GM12878 (cell line): ENCODE measurements at regions of chr20 and their contacts with region 1.

Region 1: DNA sequence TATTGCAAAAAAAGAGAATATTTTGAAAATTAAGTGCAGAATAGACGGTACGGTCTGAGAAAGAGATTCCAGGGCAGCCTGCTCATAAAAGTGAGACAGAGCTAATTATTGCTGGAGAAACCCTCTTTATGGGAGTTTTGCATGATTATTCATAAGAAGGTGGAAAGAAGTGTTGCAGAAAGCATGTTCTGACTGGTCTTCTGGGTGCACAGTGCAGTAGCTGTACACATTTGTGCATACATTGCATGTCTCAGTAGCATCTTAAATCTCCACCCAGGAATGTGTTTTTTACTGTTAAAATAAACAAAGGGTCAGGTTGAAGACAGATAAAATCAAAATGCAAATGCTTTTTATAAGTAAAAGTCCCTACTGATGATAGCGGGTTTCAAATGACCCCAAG is 1813.6 kb upstream of the DEFB115 start:
- DNase-seq: peak; percentile 42
- ATAC-seq: peak; percentile 95
- H3K4me3 ChIP-seq: no peak overlapping the region
- H3K27ac ChIP-seq: no peak overlapping the region
- H3K4me1 ChIP-seq: no peaks in the 10 kb centered on the region
- H3K27me3 ChIP-seq: no peaks in the 10 kb centered on the region
- CTCF ChIP-seq: no peak
- EP300 ChIP-seq: no peak
- POLR2A ChIP-seq: no peak
- RAD21 ChIP-seq: no peak

Region 2: DNA sequence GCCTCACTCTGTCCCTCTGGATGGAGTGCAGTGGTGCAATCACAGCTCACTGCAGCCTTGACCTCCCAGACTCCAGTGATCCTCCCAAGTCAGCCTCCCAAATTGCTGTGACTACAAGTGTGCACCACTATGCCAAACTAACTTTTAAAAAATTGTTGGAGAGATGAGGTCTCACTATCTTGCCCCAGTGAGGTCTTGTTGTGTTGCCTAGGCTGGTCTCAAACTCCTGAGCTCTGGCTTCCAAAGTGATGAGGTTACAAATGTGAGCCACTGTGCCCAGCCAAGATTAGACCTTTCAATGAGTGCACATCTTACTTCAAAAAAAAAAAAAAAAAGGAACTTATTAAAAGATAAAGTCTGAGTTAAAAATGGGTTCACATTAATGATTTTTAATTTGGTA is 24.4 kb before region 1 on chr20:
- CTCF ChIA-PET with region 1: no interaction called
- POLR2A ChIA-PET with region 1: no interaction called
- RAD21 ChIA-PET with region 1: no interaction called
- SMC1A ChIA-PET with region 1: no interaction called
- in situ Hi-C with region 1: no loop called
- intact Hi-C with region 1: no loop called
- DNase-seq: no peak
- ATAC-seq: no peak
- H3K4me3 ChIP-seq: no peak overlapping the region
- H3K27ac ChIP-seq: no peak overlapping the region
- H3K4me1 ChIP-seq: no peaks in the 10 kb centered on the region
- H3K27me3 ChIP-seq: no peaks in the 10 kb centered on the region
- CTCF ChIP-seq: no peak
- EP300 ChIP-seq: no peak
- POLR2A ChIP-seq: no peak
- RAD21 ChIP-seq: no peak

Region 3: DNA sequence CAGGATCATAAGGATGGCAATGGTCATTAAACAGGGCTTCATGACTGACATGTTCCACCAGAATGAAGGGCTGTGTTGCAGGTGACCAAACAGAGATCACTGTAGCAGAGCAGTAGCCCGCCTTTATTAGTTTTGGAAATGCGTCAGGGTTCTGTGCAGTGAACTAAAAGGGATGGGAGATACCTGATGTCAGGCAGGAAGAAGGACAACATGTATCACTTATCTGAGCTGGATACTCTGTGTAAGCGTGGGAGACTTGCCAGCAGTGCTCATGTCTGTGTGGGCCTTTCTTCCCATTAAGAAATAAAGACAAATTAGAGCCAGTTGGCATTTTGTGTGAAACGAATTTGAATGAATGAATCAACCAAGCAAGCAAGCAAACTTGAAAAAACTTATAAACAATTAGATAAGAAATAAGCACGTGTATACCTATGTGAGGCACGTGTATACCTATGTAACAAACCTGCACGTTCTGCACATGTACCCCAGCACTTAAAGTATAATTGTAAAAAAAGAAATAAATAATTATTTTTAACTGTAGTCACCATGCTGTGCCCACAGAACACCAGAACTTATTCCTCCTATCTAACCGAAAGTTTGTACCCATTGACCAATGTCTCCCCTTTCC is 1864.8 kb after region 1 on chr20 and contains the start of gene DEFB116:
- CTCF ChIA-PET with region 1: no interaction called
- POLR2A ChIA-PET with region 1: no interaction called
- RAD21 ChIA-PET with region 1: no interaction called
- SMC1A ChIA-PET with region 1: no interaction called
- in situ Hi-C with region 1: loop called (anchors 25 kb)
- intact Hi-C with region 1: loop called (anchors 5 kb)
- DNase-seq: no peak
- ATAC-seq: no peak
- H3K4me3 ChIP-seq: no peak within 1 kb of the TSS
- H3K27ac ChIP-seq: no peak within 1 kb of the TSS
- H3K4me1 ChIP-seq: no peaks in the 10 kb centered on the region
- H3K27me3 ChIP-seq: no peaks in the 10 kb centered on the region
- CTCF ChIP-seq: no peak
- EP300 ChIP-seq: no peak
- POLR2A ChIP-seq: no peak
- RAD21 ChIP-seq: no peak
- polyA plus RNA-seq, gene DEFB116: not detected

Region 4: GRCh38 chr20:31322504-31322903 is 1878.7 kb after region 1 on chr20:
- CTCF ChIA-PET with region 1: no interaction called
- POLR2A ChIA-PET with region 1: no interaction called
- RAD21 ChIA-PET with region 1: no interaction called
- SMC1A ChIA-PET with region 1: no interaction called
- in situ Hi-C with region 1: loop called (anchors 25 kb)
- intact Hi-C with region 1: no loop called
- DNase-seq: no peak
- ATAC-seq: no peak
- H3K4me3 ChIP-seq: no peak overlapping the region
- H3K27ac ChIP-seq: no peak overlapping the region
- H3K4me1 ChIP-seq: no peaks in the 10 kb centered on the region
- H3K27me3 ChIP-seq: no peaks in the 10 kb centered on the region
- CTCF ChIP-seq: no peak
- EP300 ChIP-seq: no peak
- POLR2A ChIP-seq: no peak
- RAD21 ChIP-seq: no peak